ENCODE measurements at regions of chr11 and their contacts with region 1.

Region 1: DNA sequence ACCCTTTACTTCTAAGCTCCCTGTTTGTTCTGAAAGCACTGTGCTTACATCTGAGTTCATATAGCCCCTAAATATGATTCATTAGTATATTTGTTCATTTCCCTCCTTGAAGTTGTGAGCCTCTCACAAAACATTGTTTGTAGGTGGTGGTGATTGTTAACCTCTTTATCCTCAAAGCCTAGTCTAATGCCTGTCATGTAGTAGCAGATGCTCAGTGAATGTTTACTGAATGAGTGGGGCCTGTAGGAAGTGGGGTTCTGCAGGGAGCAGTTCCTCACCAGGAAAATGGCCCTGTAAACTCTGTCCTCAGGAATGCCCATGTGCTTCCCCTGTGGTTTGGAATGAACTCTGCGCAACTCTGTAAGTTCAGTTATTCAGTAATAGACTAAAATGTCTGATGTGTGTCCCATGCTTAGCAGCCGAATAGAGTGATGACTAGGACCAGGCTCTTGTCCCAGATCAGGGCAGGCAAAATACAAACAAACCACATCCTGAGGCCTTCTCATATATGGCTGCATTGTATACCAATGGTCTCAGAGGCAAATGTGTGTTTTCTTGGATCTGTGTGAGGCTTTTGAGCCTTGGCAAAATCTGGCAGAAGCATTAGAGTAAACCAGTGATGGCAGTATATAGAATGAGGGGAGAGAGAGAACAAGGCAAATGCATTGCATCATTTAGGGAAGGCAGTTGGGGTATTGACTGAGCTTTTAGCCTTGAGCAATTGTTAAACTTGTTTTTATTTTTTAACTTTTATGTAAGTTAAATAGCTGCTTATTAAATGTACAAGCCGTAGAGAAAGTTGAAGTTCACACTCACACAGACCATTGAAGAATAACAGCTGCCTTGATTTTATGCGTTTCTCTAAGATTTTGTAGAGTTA is 91.4 kb upstream of the BIRC3 start:
- DNase-seq: peak; percentile 71
- H3K4me3 Mint-ChIP-seq: peak overlapping the region; percentile 48
- H3K27ac Mint-ChIP-seq: peak overlapping the region; percentile 87
- H3K4me1 Mint-ChIP-seq: peaks cover 46% of the 10 kb centered on the region
- H3K27me3 Mint-ChIP-seq: no peaks in the 10 kb centered on the region
- CTCF ChIP-seq: no peak

Region 2: GRCh38 chr11:102017026-102017425 is 208.9 kb before region 1 on chr11:
- CTCF ChIA-PET with region 1: no interaction called
- POLR2A ChIA-PET with region 1: no interaction called
- intact Hi-C with region 1: no loop called
- DNase-seq: no peak
- H3K4me3 Mint-ChIP-seq: no peak overlapping the region
- H3K27ac Mint-ChIP-seq: no peak overlapping the region
- H3K4me1 Mint-ChIP-seq: no peaks in the 10 kb centered on the region
- H3K27me3 Mint-ChIP-seq: no peaks in the 10 kb centered on the region
- CTCF ChIP-seq: no peak

Region 3: GRCh38 chr11:102115557-102115956 is 110.4 kb before region 1 on chr11:
- CTCF ChIA-PET with region 1: no interaction called
- POLR2A ChIA-PET with region 1: interaction called, 14 read pairs
- intact Hi-C with region 1: loop called (anchors 2 kb)
- DNase-seq: peak; percentile 54
- H3K4me3 Mint-ChIP-seq: no peak overlapping the region
- H3K27ac Mint-ChIP-seq: no peak overlapping the region
- H3K4me1 Mint-ChIP-seq: peaks cover 25% of the 10 kb centered on the region
- H3K27me3 Mint-ChIP-seq: no peaks in the 10 kb centered on the region
- CTCF ChIP-seq: no peak

Region 4: DNA sequence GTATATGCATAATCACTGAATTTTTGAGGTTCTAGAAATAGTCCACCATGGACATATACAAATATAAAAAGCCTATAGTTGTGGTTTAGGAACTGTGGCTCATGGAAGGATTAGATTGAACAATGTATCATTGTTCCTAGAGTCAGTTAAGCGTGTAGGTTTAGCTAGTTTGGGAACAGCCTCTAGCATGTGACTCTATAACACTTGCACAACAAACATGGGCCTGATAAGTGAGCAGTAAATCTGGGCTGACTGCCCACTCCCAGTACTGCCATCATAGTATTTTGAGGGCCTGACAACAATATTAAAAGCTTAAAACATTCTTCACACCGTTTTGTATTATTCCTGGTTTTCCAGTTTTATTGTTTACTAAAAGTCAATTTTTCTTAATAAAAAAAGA is 68.7 kb before region 1 on chr11:
- CTCF ChIA-PET with region 1: no interaction called
- POLR2A ChIA-PET with region 1: interaction called, 15 read pairs
- intact Hi-C with region 1: no loop called
- DNase-seq: peak; percentile 87
- H3K4me3 Mint-ChIP-seq: no peak overlapping the region
- H3K27ac Mint-ChIP-seq: peak overlapping the region; percentile 39
- H3K4me1 Mint-ChIP-seq: peaks cover 48% of the 10 kb centered on the region
- H3K27me3 Mint-ChIP-seq: no peaks in the 10 kb centered on the region
- CTCF ChIP-seq: no peak

Region 5: DNA sequence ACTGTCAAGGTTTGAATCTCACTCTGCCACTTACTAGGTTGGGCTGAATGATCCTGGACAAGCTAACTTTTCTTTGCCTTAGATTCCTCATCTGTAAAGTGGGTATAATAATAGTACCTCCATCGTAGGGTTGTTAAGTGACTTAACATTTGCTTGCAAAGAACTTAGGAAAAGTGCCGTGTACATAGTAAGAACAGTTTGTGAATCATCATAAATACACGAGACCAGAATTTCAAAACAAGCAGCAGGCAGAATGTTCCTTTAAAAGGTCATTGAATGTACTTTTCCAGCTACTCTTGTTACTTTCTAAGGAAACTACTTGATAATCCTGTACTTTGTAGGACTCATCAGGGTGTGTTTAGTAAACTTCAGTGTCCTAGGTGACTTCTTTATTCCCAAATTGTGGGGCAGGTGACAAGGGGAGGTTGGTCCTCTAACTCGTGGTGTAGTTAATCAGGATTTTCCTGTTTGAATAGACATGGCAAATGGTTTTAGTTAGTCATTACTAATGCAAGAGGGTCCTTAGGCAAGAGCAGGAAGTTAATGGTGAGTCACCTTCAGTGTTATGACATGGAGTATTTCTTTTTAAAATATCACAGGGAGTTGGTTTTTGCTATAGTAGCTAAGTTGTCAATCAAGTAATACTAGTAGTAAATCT is 47.8 kb before region 1 on chr11:
- CTCF ChIA-PET with region 1: interaction called, 4 read pairs
- POLR2A ChIA-PET with region 1: interaction called, 11 read pairs
- intact Hi-C with region 1: no loop called
- DNase-seq: peak; percentile 92
- H3K4me3 Mint-ChIP-seq: peak overlapping the region; percentile 49
- H3K27ac Mint-ChIP-seq: peak overlapping the region; percentile 17
- H3K4me1 Mint-ChIP-seq: peaks cover 38% of the 10 kb centered on the region
- H3K27me3 Mint-ChIP-seq: no peaks in the 10 kb centered on the region
- CTCF ChIP-seq: no peak

Region 6: GRCh38 chr11:102214623-102215022 is 11.3 kb before region 1 on chr11:
- CTCF ChIA-PET with region 1: no interaction called
- POLR2A ChIA-PET with region 1: interaction called, 10 read pairs
- intact Hi-C with region 1: no loop called
- DNase-seq: no peak
- H3K4me3 Mint-ChIP-seq: no peak overlapping the region
- H3K27ac Mint-ChIP-seq: no peak overlapping the region
- H3K4me1 Mint-ChIP-seq: peaks cover 5% of the 10 kb centered on the region
- H3K27me3 Mint-ChIP-seq: no peaks in the 10 kb centered on the region
- CTCF ChIP-seq: no peak

Region 7: GRCh38 chr11:102237096-102237735 is 11.3 kb after region 1 on chr11:
- CTCF ChIA-PET with region 1: interaction called, 8 read pairs
- POLR2A ChIA-PET with region 1: interaction called, 10 read pairs
- intact Hi-C with region 1: no loop called
- DNase-seq: no peak
- H3K4me3 Mint-ChIP-seq: no peak overlapping the region
- H3K27ac Mint-ChIP-seq: peak overlapping the region; percentile 39
- H3K4me1 Mint-ChIP-seq: peaks cover 12% of the 10 kb centered on the region
- H3K27me3 Mint-ChIP-seq: no peaks in the 10 kb centered on the region
- CTCF ChIP-seq: no peak

Region 8: GRCh38 chr11:102254045-102254444 is 28.1 kb after region 1 on chr11:
- CTCF ChIA-PET with region 1: interaction called, 14 read pairs
- POLR2A ChIA-PET with region 1: interaction called, 75 read pairs
- intact Hi-C with region 1: no loop called
- DNase-seq: peak; percentile 36
- H3K4me3 Mint-ChIP-seq: no peak overlapping the region
- H3K27ac Mint-ChIP-seq: no peak overlapping the region
- H3K4me1 Mint-ChIP-seq: peaks cover 29% of the 10 kb centered on the region
- H3K27me3 Mint-ChIP-seq: no peaks in the 10 kb centered on the region
- CTCF ChIP-seq: peak; percentile 28

Region 9: DNA sequence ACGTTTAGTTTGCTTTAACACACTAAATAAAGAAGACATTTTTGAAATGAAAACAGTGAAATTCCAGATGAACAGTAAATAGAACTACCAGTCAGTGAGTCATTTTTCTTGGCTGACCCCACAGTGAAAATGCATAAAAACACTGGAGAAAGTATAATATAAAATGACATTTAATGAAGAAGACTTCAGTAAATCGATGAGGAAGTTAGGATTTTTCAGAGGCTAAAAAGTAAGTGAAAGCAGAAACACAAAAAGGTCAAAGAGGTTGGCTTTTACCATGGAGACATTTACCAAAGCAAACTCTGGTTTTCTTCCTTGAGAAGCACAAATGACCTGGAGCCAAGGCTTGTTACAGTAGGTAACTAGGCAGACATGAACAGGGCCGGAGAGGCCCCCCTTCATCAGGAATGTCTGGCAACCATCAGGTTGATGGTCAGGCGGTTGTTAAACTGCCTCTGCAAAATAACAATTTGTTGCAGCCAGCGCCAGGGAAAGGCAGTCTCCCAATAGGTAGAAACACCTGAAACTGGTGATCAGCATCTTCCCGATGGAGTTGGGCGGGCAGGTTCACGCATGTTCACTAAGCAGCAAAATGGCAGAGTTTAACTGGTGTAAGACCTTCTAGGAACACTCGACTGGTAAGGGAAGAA is 243.4 kb after region 1 on chr11:
- CTCF ChIA-PET with region 1: no interaction called
- POLR2A ChIA-PET with region 1: no interaction called
- intact Hi-C with region 1: no loop called
- DNase-seq: no peak
- H3K4me3 Mint-ChIP-seq: no peak overlapping the region
- H3K27ac Mint-ChIP-seq: peak overlapping the region; percentile 64
- H3K4me1 Mint-ChIP-seq: peaks cover 31% of the 10 kb centered on the region
- H3K27me3 Mint-ChIP-seq: no peaks in the 10 kb centered on the region
- CTCF ChIP-seq: no peak